Heart right ventricle (tissue), 16 donors: ENCODE measurements at regions of chr5 and their contacts with region 1.

Region 1: DNA sequence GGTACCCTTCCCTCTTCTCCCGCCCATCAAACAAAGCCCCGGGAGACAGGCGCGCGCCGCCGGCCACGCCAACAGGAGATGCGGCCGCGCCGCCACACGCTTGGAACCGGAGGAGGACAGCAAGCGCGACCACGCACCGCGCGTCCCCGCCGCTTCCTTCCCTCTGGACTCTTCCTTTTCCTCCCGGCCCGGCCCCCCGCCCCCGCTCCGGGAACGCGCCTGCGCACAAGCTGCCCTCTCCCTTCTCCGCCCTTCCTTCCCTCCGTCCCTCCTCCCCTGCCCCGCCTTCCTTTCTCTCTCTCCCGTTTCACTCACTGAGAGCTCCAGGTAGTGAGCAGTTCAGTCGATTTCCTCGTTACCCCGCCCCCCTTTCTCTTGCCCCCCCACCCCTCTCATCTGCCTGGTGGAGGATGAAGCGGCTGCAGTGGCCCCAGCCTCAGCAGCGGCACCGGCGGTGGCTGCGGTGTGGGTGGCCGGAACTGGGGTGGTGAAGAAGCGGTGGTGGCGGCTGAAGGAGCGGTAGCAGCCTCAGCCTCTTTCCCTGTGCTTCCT is at the start of gene RASA1:
- DNase-seq: peak; percentile 96 to 97
- ATAC-seq: peak; percentile 97 to 99 (median 98)
- H3K4me3 ChIP-seq: peak within 1 kb of the TSS; percentile 76 to 99 (median 94)
- H3K27ac ChIP-seq: peak within 1 kb of the TSS; percentile 80 to 97 (median 94)
- H3K4me1 ChIP-seq: peaks cover 0 to 39% (median 26%) of the 10 kb centered on the region in 9 donors
- H3K27me3 ChIP-seq: no peaks in the 10 kb centered on the region
- CTCF ChIP-seq: peak in 1 of 9 donors; percentile 8
- total RNA-seq, gene RASA1: 14.8 to 21.0 (median 18.6) TPM

Region 2: GRCh38 chr5:87170799-87171375 is 96.8 kb before region 1 on chr5:
- intact Hi-C with region 1: no loop called
- DNase-seq: no peak
- ATAC-seq: peak in 1 of 8 donors; percentile 37
- H3K4me3 ChIP-seq: no peak overlapping the region
- H3K27ac ChIP-seq: no peak overlapping the region
- H3K4me1 ChIP-seq: no peaks in the 10 kb centered on the region
- H3K27me3 ChIP-seq: no peaks in the 10 kb centered on the region
- CTCF ChIP-seq: no peak

Region 3: GRCh38 chr5:87300744-87301143 is 33.1 kb after region 1 on chr5:
- intact Hi-C with region 1: no loop called
- DNase-seq: no peak
- ATAC-seq: peak in 1 of 8 donors; percentile 94
- H3K4me3 ChIP-seq: no peak overlapping the region
- H3K27ac ChIP-seq: no peak overlapping the region
- H3K4me1 ChIP-seq: peaks cover 0 to 58% (median 14%) of the 10 kb centered on the region in 9 donors
- H3K27me3 ChIP-seq: no peaks in the 10 kb centered on the region
- CTCF ChIP-seq: no peak

Region 4: DNA sequence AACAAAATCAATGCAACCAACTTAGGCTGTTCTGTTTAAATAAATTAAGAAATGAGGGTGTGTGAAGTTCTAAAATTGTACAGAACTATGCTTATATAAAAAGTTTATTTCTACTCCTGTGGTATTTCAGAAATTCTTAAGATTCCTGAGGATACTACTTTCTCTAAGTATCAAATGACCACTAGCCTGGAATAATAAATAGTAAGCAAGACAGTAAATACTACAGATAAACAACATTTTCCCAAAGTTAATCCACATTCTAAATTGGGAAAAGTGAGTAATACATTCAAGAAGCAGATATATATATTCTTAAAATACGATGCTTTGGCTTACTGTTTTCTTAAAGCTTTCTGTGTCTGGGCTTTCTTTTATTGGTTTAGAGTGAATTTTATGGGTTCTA is 115.6 kb after region 1 on chr5:
- intact Hi-C with region 1: loop called in 3 of 10 experiments (anchors 10 kb)
- DNase-seq: no peak
- ATAC-seq: no peak
- H3K4me3 ChIP-seq: no peak overlapping the region
- H3K27ac ChIP-seq: no peak overlapping the region
- H3K4me1 ChIP-seq: peaks cover 0 to 10% (median 4%) of the 10 kb centered on the region in 9 donors
- H3K27me3 ChIP-seq: no peaks in the 10 kb centered on the region
- CTCF ChIP-seq: no peak

Region 5: GRCh38 chr5:87393331-87393730 is 125.7 kb after region 1 on chr5:
- intact Hi-C with region 1: loop called in 6 of 10 experiments (anchors 10 kb)
- DNase-seq: no peak
- ATAC-seq: no peak
- H3K4me3 ChIP-seq: no peak overlapping the region
- H3K27ac ChIP-seq: no peak overlapping the region
- H3K4me1 ChIP-seq: peaks cover 0 to 25% (median 5%) of the 10 kb centered on the region in 9 donors
- H3K27me3 ChIP-seq: no peaks in the 10 kb centered on the region
- CTCF ChIP-seq: no peak

Region 6: DNA sequence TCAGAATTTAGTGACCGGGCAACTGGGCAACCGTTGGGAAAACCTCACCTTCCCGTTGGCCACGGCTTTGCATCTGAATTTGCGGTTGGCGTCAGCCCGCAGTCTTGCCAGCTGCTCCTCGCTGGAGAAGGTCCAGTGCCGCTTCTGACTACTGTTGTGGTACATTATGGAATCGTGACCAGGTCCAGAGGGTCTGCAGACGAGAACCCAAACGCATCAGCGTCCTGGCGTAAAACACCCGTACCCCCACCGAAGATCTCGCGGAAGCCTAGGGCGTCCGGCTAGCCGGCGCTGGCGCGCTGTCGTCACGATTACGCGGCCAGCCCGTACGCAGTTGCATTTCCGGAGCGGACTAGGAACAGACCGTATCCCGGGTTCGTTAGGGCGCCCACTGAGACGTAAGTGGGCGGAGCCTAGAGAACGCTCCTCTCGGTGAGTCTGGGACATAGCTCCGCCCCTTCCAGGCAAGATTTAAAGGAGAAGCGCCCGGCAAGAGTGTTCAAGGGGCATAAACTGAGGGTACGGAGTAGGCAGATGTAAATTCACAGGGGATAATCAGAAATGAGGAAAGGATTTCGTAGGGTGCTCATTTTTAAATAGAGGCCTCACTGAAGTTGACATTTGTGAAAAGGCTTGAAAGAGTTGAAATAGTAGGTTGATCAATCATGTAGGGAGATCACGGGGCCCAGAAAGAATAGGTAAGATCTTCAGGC is 145.1 kb after region 1 on chr5 and contains the start of gene CCNH:
- intact Hi-C with region 1: loop called in 2 of 10 experiments (anchors 5 to 10 kb)
- DNase-seq: peak; percentile 95 to 99
- ATAC-seq: peak; percentile 98 to 100 (median 99)
- H3K4me3 ChIP-seq: peak within 1 kb of the TSS; percentile 77 to 98 (median 87)
- H3K27ac ChIP-seq: peak within 1 kb of the TSS; percentile 96 to 100 (median 98)
- H3K4me1 ChIP-seq: peaks cover 0 to 43% (median 16%) of the 10 kb centered on the region in 9 donors
- H3K27me3 ChIP-seq: no peaks in the 10 kb centered on the region
- CTCF ChIP-seq: peak in 2 of 9 donors; percentile 6 to 10
- total RNA-seq, gene CCNH: 23.5 to 34.8 (median 24.5) TPM